Endothelial cell of umbilical vein (primary cell): ENCODE measurements at regions of chr16 and their contacts with region 1.

Region 1: DNA sequence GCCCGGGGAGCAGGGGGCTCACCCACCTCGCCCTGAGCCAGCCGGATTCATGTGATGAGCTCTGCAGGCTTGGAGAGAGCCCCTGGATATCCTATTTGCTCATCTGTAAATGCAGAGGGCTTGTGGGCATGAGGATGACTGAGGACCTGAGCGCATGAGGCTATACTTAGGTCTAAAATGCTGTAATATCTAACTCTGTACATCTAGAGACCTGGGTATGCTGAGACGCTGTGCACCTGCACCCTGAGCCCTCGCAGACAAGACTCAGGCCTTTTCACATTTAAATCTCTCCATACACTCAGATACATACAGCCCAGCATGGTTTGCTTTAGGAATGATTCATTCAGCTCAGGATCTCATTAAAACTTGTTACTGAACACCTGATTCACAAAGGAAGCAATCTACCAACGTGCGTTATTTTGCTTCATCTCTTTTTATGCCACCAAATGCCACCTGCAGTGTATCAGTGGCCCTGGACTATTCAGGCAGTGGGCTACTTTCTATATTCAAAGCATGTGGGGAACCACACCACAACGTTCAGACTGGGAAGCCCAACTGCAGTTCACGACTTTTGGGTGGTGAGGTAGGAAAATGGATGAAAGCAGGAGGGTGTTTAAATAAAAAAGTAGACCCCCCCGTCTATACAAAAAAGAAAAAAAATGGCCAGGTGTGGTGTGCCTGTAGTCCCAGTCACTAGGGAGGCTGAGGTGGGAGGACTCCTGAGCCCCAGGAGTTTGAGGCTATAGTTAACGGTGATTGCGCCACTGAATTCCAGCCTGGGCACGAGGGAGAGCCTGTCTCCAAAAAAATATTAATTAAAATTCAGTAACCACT is 12.0 kb downstream of the USP7 start:
- DNase-seq: no peak
- H3K4me3 ChIP-seq: no peak overlapping the region
- H3K27ac ChIP-seq: no peak overlapping the region
- H3K4me1 ChIP-seq: no peaks in the 10 kb centered on the region
- H3K27me3 ChIP-seq: no peaks in the 10 kb centered on the region
- CTCF ChIP-seq: no peak
- POLR2A ChIP-seq: no peak

Region 2: GRCh38 chr16:8868416-8869211 is 83.0 kb before region 1 on chr16 and contains the start of gene CARHSP1:
- CTCF ChIA-PET with region 1: no interaction called
- POLR2A ChIA-PET with region 1: no interaction called
- dilution Hi-C with region 1: no loop called
- intact Hi-C with region 1: no loop called
- DNase-seq: peak; percentile 92
- H3K4me3 ChIP-seq: peak within 1 kb of the TSS; percentile 60 to 80 (median 75)
- H3K27ac ChIP-seq: peak within 1 kb of the TSS; percentile 64
- H3K4me1 ChIP-seq: peaks cover 20% of the 10 kb centered on the region
- H3K27me3 ChIP-seq: no peaks in the 10 kb centered on the region
- CTCF ChIP-seq: no peak
- POLR2A ChIP-seq: peak; percentile 72
- total RNA-seq, gene CARHSP1: 69.2 and 72.5 TPM in 2 replicates

Region 3: DNA sequence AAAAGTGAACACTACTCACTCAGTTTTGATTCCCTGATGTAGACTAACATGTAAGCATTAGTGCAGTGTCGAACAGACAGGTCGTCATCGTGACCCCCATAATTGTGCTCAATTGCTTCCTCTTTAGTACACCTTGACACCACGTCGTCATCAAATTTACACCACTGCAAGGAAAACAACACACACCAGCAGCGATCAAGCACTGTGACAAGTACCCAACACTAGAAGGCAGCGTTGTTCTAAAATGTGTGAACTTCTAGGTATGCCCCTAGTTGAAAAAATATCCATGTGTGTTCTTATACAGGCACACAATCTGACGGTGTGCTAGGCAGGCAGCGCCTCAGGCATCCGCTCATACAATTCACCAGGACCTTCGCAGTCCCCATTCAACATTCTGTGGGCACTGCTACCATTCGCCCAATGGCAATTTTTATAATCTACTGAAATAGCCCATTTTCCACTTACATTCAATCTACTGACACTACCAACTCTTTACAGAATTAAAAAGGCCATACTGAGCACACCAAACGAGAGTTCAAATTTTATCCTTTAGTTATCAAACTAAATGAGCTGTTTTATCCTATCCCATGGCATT is 46.4 kb before region 1 on chr16:
- CTCF ChIA-PET with region 1: no interaction called
- POLR2A ChIA-PET with region 1: no interaction called
- dilution Hi-C with region 1: no loop called
- intact Hi-C with region 1: no loop called
- DNase-seq: peak; percentile 42
- H3K4me3 ChIP-seq: no peak overlapping the region
- H3K27ac ChIP-seq: no peak overlapping the region
- H3K4me1 ChIP-seq: no peaks in the 10 kb centered on the region
- H3K27me3 ChIP-seq: no peaks in the 10 kb centered on the region
- CTCF ChIP-seq: peak; percentile 27 to 50
- POLR2A ChIP-seq: no peak

Region 4: GRCh38 chr16:8936421-8936820 is 15.2 kb before region 1 on chr16:
- CTCF ChIA-PET with region 1: interaction called, 21 read pairs
- POLR2A ChIA-PET with region 1: no interaction called
- dilution Hi-C with region 1: no loop called
- intact Hi-C with region 1: no loop called
- DNase-seq: peak; percentile 29
- H3K4me3 ChIP-seq: no peak overlapping the region
- H3K27ac ChIP-seq: no peak overlapping the region
- H3K4me1 ChIP-seq: no peaks in the 10 kb centered on the region
- H3K27me3 ChIP-seq: no peaks in the 10 kb centered on the region
- CTCF ChIP-seq: peak; percentile 27 to 57
- POLR2A ChIP-seq: no peak

Region 5: GRCh38 chr16:8972843-8973586 is 21.4 kb after region 1 on chr16:
- CTCF ChIA-PET with region 1: no interaction called
- POLR2A ChIA-PET with region 1: no interaction called
- dilution Hi-C with region 1: no loop called
- intact Hi-C with region 1: no loop called
- DNase-seq: no peak
- H3K4me3 ChIP-seq: no peak overlapping the region
- H3K27ac ChIP-seq: no peak overlapping the region
- H3K4me1 ChIP-seq: no peaks in the 10 kb centered on the region
- H3K27me3 ChIP-seq: peaks cover 4% of the 10 kb centered on the region in 2 experiments
- CTCF ChIP-seq: no peak
- POLR2A ChIP-seq: no peak

Region 6: DNA sequence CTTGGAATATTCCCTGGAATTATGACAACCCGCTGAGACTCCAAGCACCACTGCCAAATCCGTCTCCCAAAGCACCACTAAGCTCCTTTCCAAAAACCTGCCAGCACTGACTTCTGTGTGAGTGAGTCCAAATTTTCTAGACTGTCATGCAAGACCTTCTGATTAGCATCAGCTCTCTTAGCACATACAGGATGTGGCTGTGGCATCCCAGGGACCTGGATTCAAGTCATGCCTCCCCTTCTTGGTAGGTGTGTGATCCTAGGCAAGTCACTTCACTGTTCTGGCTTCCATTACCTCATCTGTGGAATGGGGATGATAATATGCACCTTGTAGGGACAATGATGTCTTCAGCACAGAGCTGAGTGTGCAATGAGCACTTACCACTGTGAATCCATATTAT is 50.4 kb after region 1 on chr16:
- CTCF ChIA-PET with region 1: no interaction called
- POLR2A ChIA-PET with region 1: no interaction called
- dilution Hi-C with region 1: no loop called
- intact Hi-C with region 1: no loop called
- DNase-seq: no peak
- H3K4me3 ChIP-seq: no peak overlapping the region
- H3K27ac ChIP-seq: no peak overlapping the region
- H3K4me1 ChIP-seq: no peaks in the 10 kb centered on the region
- H3K27me3 ChIP-seq: no peaks in the 10 kb centered on the region
- CTCF ChIP-seq: no peak
- POLR2A ChIP-seq: no peak